ENCODE measurements at regions of chr10 and their contacts with region 1.

Region 1: GRCh38 chr10:25725918-25726716 is 207.9 kb upstream of the MYO3A start:
- ATAC-seq: peak in 5 of 8 experiments; percentile 44 to 75 (median 66)
- H3K4me3 ChIP-seq: no peak overlapping the region
- H3K27ac ChIP-seq: no peak overlapping the region
- H3K4me1 ChIP-seq: no peaks in the 10 kb centered on the region

Region 2: DNA sequence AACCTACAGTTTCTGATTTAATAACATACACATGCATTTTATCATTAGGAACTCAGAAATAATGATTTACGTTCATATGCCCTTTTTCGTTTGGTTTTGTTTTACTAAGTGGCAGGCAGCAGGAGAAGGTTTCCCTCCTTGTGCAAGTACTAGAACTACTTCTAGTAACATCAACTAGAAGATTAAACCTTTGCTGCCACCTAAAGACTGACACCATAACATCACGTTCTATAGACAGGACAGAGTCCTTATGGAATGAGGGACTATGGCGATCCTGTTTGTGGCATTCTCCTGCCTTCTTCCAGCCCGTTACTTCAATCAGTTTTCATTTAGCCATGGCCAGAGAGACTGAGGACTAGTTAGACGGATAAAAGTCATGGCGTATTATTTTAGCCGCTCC is 543.6 kb after region 1 on chr10:
- in situ Hi-C with region 1: loop called in 2 of 9 experiments (anchors 25 kb)
- ATAC-seq: peak; percentile 67 to 95 (median 86)
- H3K4me3 ChIP-seq: no peak overlapping the region
- H3K27ac ChIP-seq: no peak overlapping the region
- H3K4me1 ChIP-seq: peaks cover 0 to 9% of the 10 kb centered on the region in 2 donors

Measured in motor neuron (in vitro differentiated cells).